Activated CD4-positive, alpha-beta memory T cell treated with anti-CD3 and anti-CD28 coated beads for 36 hours (primary cell): ENCODE measurements at regions of chr5 and their contacts with region 1.

Region 1: DNA sequence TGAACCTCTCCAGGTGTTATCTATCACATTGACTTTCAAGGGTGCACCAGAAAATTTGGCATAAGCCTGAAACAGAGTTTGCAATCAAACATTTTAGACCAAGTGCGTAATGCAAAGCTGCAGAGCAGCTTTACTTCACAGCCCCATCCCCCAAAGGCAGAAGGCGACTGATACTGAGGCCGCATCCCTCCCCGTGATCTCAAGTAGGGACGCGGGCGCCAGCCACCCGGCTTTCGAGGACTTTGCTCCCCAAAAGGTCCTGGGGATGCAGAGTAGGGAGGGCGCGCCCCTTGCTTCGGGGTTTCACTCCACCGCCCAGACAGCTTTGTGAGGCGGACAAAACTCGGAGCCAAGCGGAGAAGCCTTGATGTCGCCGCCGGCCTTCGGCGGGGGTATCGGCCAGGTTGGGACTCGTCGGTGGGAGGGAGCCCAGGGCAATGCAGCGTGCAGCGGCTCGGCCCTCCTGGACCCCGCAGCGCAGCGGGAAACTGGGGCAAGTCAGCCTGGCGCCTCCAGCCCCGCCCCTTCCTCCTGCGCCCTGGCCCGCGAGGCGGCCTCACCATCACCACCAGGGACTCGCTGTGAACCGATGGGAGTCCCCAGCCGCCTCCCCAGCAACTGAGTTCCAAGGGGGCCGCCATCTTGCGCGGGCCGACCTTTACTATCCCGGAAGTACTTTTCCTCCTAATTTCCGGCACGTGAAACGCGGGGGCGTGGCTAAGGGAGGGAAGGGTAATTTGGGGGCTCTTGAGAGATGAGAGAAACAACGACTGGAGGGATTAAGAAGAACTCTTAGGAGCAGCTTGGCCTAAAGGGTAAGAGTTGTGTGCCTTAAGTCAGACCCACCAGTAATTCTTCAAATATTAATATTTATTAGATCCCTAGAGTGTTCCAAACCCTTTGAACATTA is at the start of gene MTX3:
- DNase-seq: peak; percentile 93
- H3K4me3 Mint-ChIP-seq: peak within 1 kb of the TSS; percentile 84
- H3K27ac Mint-ChIP-seq: peak within 1 kb of the TSS; percentile 96
- H3K4me1 Mint-ChIP-seq: peaks cover 40% of the 10 kb centered on the region
- H3K27me3 Mint-ChIP-seq: peaks cover 2% of the 10 kb centered on the region
- total RNA-seq, gene MTX3: 13.3 to 16.8 TPM

Region 2: DNA sequence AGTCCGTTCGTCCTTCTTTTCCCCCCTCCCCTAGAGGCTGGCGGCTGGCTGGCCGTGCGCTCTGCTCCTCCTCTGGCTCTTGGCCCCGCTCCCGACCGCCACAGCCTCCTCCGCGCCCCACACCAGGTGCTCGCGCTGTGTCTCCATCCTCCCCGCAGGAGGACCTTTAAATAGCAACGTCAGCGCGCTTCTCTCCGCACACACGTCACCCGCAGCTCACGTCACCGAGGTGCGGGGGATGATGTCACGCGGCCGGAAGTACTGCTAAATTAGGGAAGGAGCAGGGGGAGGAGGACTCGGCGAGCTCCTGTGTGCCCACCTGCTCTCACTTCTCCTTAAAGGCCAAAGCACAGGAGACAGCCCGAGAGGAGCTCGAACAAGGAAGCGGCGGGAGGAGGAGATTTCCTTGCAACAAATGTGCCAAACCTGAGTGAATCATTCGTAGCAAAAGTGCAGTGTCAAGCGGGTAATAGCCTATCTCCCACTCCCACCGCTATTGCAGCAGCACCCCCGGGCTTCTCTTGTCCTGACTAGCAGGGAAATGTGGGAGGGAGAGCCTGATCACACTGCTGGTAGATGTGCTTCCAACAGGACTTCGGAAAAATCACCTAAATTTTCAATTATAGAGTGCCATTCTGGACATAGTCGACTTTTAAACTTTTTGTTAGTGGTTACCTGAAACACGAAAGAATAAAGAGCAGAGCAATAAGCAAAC is 476.3 kb before region 1 on chr5:
- CTCF ChIA-PET with region 1: no interaction called
- POLR2A ChIA-PET with region 1: interaction called, 6 read pairs
- intact Hi-C with region 1: loop called (anchors 1 kb)
- DNase-seq: peak; percentile 93
- H3K4me3 Mint-ChIP-seq: peak overlapping the region; percentile 92
- H3K27ac Mint-ChIP-seq: peak overlapping the region; percentile 91
- H3K4me1 Mint-ChIP-seq: peaks cover 28% of the 10 kb centered on the region
- H3K27me3 Mint-ChIP-seq: peaks cover 24% of the 10 kb centered on the region

Region 3: DNA sequence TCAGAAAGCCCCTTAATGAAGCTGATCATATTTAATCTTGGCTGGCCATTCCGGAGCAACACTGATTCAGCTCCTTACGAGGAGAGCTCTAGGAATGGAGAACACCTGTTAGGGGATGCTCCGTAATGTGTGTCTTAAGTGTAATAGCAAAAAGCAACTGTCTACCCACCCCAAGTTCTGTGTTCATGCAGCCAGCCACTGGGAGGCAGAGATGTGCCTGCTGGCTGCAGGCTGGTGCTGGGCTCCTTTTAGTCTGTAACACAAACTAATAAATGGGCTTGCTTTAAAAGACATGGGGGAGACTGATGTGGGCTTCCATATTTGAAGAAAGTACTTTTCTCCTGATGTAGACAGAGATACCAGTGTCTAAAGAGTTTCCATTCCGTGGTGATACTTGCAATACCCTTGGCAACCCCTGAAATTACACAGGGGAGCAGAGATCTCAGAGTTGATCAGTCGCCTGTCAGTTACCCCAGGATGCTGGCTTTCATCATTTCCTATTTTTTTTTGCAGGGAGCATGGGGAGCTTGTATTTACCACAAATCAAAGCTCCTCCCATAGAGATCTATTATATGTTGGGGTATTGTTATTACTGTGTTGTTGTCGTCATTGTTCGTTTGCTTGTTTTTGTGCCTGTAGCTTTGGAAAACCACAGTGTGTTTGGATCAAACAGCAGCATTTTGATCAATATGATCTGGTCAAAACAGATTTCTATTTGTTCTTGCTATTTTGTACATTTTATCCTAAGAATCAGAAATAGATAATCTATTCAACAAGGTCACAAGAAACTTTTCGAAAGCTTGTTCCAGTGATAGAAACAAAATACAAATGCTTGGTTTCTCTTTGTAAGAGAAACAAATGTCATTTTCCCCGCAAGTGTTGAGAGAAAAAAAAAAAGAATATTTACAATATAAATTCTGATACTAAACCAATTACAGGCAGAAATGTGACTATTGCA is 65.6 kb before region 1 on chr5:
- CTCF ChIA-PET with region 1: no interaction called
- POLR2A ChIA-PET with region 1: no interaction called
- intact Hi-C with region 1: loop called (anchors 2 kb)
- DNase-seq: peak; percentile 34
- H3K4me3 Mint-ChIP-seq: no peak overlapping the region
- H3K27ac Mint-ChIP-seq: no peak overlapping the region
- H3K4me1 Mint-ChIP-seq: no peaks in the 10 kb centered on the region
- H3K27me3 Mint-ChIP-seq: peaks cover 4% of the 10 kb centered on the region

Region 4: GRCh38 chr5:80034962-80035821 is 44.3 kb after region 1 on chr5 and contains the start of gene THBS4:
- CTCF ChIA-PET with region 1: interaction called, 6 read pairs
- POLR2A ChIA-PET with region 1: interaction called, 16 read pairs
- intact Hi-C with region 1: loop called (anchors 1 kb)
- DNase-seq: no peak
- H3K4me3 Mint-ChIP-seq: peak within 1 kb of the TSS; percentile 38
- H3K27ac Mint-ChIP-seq: no peak within 1 kb of the TSS
- H3K4me1 Mint-ChIP-seq: peaks cover 37% of the 10 kb centered on the region
- H3K27me3 Mint-ChIP-seq: peaks cover 45% of the 10 kb centered on the region
- total RNA-seq, gene THBS4: 1.8 to 2.2 TPM

Region 5: GRCh38 chr5:80125962-80126480 is 135.2 kb after region 1 on chr5:
- CTCF ChIA-PET with region 1: interaction called, 4 read pairs
- POLR2A ChIA-PET with region 1: interaction called, 4 read pairs
- intact Hi-C with region 1: loop called (anchors 1 kb)
- DNase-seq: peak; percentile 28
- H3K4me3 Mint-ChIP-seq: peak overlapping the region; percentile 51
- H3K27ac Mint-ChIP-seq: peak overlapping the region; percentile 70
- H3K4me1 Mint-ChIP-seq: peaks cover 52% of the 10 kb centered on the region
- H3K27me3 Mint-ChIP-seq: no peaks in the 10 kb centered on the region

Region 6: GRCh38 chr5:80153586-80154126 is 162.8 kb after region 1 on chr5:
- CTCF ChIA-PET with region 1: no interaction called
- POLR2A ChIA-PET with region 1: no interaction called
- intact Hi-C with region 1: no loop called
- DNase-seq: no peak
- H3K4me3 Mint-ChIP-seq: no peak overlapping the region
- H3K27ac Mint-ChIP-seq: peak overlapping the region; percentile 90
- H3K4me1 Mint-ChIP-seq: peaks cover 60% of the 10 kb centered on the region
- H3K27me3 Mint-ChIP-seq: no peaks in the 10 kb centered on the region

Region 7: GRCh38 chr5:80275347-80275746 is 284.5 kb after region 1 on chr5:
- CTCF ChIA-PET with region 1: no interaction called
- POLR2A ChIA-PET with region 1: no interaction called
- intact Hi-C with region 1: loop called (anchors 10 kb)
- DNase-seq: peak; percentile 27
- H3K4me3 Mint-ChIP-seq: no peak overlapping the region
- H3K27ac Mint-ChIP-seq: no peak overlapping the region
- H3K4me1 Mint-ChIP-seq: peaks cover 18% of the 10 kb centered on the region
- H3K27me3 Mint-ChIP-seq: no peaks in the 10 kb centered on the region